ENCODE measurements at regions of chr6 and their contacts with region 1.

Region 1: GRCh38 chr6:33126101-33126714 is 50.4 kb downstream of the HLA-DPB1 start:
- DNase-seq: peak; percentile 45
- H3K4me3 ChIP-seq: no peak overlapping the region
- H3K27ac ChIP-seq: no peak overlapping the region
- H3K4me1 ChIP-seq: no peaks in the 10 kb centered on the region
- H3K27me3 ChIP-seq: peaks cover 21 to 31% of the 10 kb centered on the region in 2 experiments
- CTCF ChIP-seq: peak; percentile 74 to 83
- POLR2A ChIP-seq: no peak

Region 2: GRCh38 chr6:33112148-33112547 is 14.1 kb before region 1 on chr6:
- CTCF ChIA-PET with region 1: interaction called, 20 read pairs
- POLR2A ChIA-PET with region 1: no interaction called
- dilution Hi-C with region 1: no loop called
- intact Hi-C with region 1: no loop called
- DNase-seq: peak; percentile 78
- H3K4me3 ChIP-seq: no peak overlapping the region
- H3K27ac ChIP-seq: no peak overlapping the region
- H3K4me1 ChIP-seq: no peaks in the 10 kb centered on the region
- H3K27me3 ChIP-seq: peaks cover 50 to 58% of the 10 kb centered on the region in 2 experiments
- CTCF ChIP-seq: no peak
- POLR2A ChIP-seq: no peak

Region 3: GRCh38 chr6:33139596-33140206 is 13.5 kb after region 1 on chr6:
- CTCF ChIA-PET with region 1: interaction called, 55 read pairs
- POLR2A ChIA-PET with region 1: no interaction called
- dilution Hi-C with region 1: no loop called
- intact Hi-C with region 1: no loop called
- DNase-seq: no peak
- H3K4me3 ChIP-seq: no peak overlapping the region
- H3K27ac ChIP-seq: no peak overlapping the region
- H3K4me1 ChIP-seq: no peaks in the 10 kb centered on the region
- H3K27me3 ChIP-seq: peaks cover 8 to 20% of the 10 kb centered on the region in 2 experiments
- CTCF ChIP-seq: no peak
- POLR2A ChIP-seq: no peak

Region 4: DNA sequence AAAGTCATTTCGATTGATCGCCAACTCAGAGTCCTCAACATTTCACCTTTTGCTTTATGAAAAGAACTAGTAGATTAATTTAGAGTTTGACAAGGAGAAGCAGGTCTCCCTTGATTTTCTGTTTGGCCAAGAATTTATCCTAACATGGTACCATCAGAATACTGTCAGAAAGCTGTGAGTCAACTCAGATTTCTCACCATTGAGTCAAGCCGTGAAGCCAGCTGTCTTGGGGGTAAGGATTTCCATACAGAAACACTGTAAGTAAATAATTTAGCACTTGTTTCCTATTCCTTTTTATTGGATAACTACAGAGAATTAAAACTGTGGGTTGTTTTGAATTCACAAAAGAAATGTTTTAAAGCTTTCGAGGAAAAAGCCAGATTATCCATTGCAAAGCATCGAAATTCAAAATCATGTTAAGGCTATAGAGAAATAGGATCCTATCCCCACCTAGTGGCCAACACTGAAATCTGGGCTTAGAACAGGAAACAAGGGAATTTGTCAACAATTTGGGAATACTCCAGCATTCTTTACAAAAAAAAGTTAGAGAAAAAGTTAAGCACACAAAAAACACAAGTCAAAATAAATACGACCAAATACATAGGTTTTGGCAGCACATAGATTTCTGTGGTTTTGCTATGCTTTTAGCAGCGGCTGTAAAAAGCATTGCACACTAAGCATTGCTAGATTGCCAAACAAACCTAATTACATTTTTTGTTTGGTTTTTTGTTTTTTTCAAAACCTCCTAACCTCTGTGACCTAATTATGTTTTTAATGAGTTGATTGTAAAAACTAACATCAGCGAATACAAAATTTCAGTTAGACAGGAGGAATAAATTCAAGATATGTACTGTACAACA is 21.8 kb after region 1 on chr6:
- CTCF ChIA-PET with region 1: interaction called, 22 read pairs
- POLR2A ChIA-PET with region 1: no interaction called
- dilution Hi-C with region 1: no loop called
- intact Hi-C with region 1: no loop called
- DNase-seq: peak; percentile 49
- H3K4me3 ChIP-seq: no peak overlapping the region
- H3K27ac ChIP-seq: no peak overlapping the region
- H3K4me1 ChIP-seq: no peaks in the 10 kb centered on the region
- H3K27me3 ChIP-seq: peaks cover 10 to 27% of the 10 kb centered on the region in 2 experiments
- CTCF ChIP-seq: peak; percentile 66 to 69
- POLR2A ChIP-seq: no peak

Region 5: GRCh38 chr6:33172688-33173534 is 46.7 kb after region 1 on chr6:
- CTCF ChIA-PET with region 1: interaction called, 10 read pairs
- POLR2A ChIA-PET with region 1: no interaction called
- dilution Hi-C with region 1: no loop called
- intact Hi-C with region 1: no loop called
- DNase-seq: no peak
- H3K4me3 ChIP-seq: no peak overlapping the region
- H3K27ac ChIP-seq: no peak overlapping the region
- H3K4me1 ChIP-seq: no peaks in the 10 kb centered on the region
- H3K27me3 ChIP-seq: no peaks in the 10 kb centered on the region
- CTCF ChIP-seq: peak; percentile 26 to 34
- POLR2A ChIP-seq: no peak

Region 6: GRCh38 chr6:33320315-33321181 is 194.3 kb after region 1 on chr6:
- CTCF ChIA-PET with region 1: no interaction called
- POLR2A ChIA-PET with region 1: no interaction called
- dilution Hi-C with region 1: no loop called
- intact Hi-C with region 1: no loop called
- DNase-seq: peak; percentile 66
- H3K4me3 ChIP-seq: no peak overlapping the region
- H3K27ac ChIP-seq: peak overlapping the region; percentile 76
- H3K4me1 ChIP-seq: peaks cover 53% of the 10 kb centered on the region
- H3K27me3 ChIP-seq: no peaks in the 10 kb centered on the region
- CTCF ChIP-seq: no peak
- POLR2A ChIP-seq: no peak

Region 7: DNA sequence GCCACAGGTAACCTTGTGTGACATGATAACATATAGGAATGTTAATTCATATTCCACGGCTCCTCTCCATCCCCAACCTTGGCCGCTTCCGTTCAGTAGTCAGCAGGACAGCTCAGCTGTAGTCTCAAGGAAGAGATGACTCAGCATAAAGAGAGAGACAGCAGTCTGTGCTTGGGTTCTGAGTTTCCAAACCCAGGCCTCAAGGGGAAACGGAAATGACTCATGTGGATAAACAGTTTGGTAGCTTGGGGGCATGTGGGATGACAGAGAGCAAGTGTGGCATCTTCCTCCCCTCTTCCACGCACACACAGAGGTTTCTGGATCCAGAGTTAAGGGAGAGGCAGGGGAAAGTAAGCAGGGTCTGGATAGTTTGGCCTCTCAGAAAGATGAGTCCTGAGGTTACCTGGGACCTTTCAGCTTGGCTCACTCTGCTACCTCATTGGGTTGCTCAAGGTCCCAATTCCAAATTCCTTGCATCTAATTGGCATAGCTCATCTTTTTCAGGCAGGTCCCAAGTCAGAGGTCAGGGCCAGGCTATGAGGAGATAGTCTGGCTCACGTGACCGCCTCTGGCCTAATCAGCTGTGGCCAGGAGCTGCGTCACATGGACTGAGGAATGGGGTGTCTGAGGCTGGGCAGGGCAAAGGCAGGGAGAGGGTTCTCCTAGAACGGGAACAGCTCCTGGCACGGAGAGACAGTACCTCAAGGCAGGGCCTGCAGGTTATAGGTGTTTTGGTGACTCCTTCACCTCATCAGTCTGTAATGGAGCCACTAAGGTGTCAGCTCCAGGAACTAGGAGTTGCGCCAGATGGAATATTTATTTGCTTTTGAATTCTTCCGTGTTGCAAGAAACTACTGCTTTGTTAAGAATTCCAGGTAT is 714.1 kb after region 1 on chr6:
- CTCF ChIA-PET with region 1: no interaction called
- POLR2A ChIA-PET with region 1: no interaction called
- dilution Hi-C with region 1: no loop called
- intact Hi-C with region 1: no loop called
- DNase-seq: peak; percentile 88
- H3K4me3 ChIP-seq: no peak overlapping the region
- H3K27ac ChIP-seq: peak overlapping the region; percentile 69
- H3K4me1 ChIP-seq: peaks cover 18% of the 10 kb centered on the region
- H3K27me3 ChIP-seq: no peaks in the 10 kb centered on the region
- CTCF ChIP-seq: no peak
- POLR2A ChIP-seq: no peak